ENCODE measurements at regions of chr1 and their contacts with region 1.

Region 1: DNA sequence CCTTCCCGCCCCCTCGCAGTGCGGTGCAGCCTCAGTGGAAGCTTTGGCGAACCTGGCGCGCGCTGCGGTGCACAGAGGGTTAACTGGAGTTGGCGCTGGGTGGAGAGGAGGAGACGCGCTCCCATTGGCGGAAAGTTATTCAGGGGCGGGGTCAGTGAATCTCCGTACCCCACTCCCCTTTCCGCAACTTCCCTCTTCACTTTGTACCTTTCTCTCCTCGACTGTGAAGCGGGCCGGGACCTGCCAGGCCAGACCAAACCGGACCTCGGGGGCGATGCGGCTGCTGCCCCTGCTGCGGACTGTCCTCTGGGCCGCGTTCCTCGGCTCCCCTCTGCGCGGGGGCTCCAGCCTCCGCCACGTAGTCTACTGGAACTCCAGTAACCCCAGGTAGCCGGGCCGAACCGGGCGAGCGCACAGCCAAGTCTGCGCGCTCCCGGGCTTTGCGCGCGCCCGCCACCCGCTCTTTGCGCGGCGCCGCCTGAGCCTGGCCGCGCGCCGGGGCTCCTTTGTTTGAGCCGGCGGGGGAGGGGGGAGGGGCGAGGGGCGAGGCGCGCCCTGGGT is at the start of gene EFNA4:
- DNase-seq: peak; percentile 82
- ATAC-seq: peak; percentile 84
- H3K4me3 ChIP-seq: peak within 1 kb of the TSS; percentile 72 to 91 (median 83)
- H3K27ac ChIP-seq: peak within 1 kb of the TSS; percentile 92
- H3K4me1 ChIP-seq: peaks cover 32% of the 10 kb centered on the region
- H3K27me3 ChIP-seq: no peaks in the 10 kb centered on the region
- CTCF ChIP-seq: no peak; the same call in 1 of the 2 replicates
- EP300 ChIP-seq: no peak
- POLR2A ChIP-seq: peak; percentile 81 to 95
- RAD21 ChIP-seq: no peak
- total RNA-seq, gene EFNA4: 9.3 and 17.2 TPM in 2 replicates

Region 2: GRCh38 chr1:154982897-154983648 is 80.6 kb before region 1 on chr1 and contains the start of gene FLAD1:
- CTCF ChIA-PET with region 1: no interaction called
- POLR2A ChIA-PET with region 1: interaction called, 3 read pairs
- in situ Hi-C with region 1: loop called (anchors 5 kb)
- intact Hi-C with region 1: no loop called
- DNase-seq: peak; percentile 99
- ATAC-seq: peak; percentile 99
- H3K4me3 ChIP-seq: peak within 1 kb of the TSS; percentile 74 to 86 (median 76)
- H3K27ac ChIP-seq: peak within 1 kb of the TSS; percentile 64
- H3K4me1 ChIP-seq: peaks cover 34% of the 10 kb centered on the region
- H3K27me3 ChIP-seq: no peaks in the 10 kb centered on the region
- CTCF ChIP-seq: no peak
- EP300 ChIP-seq: no peak
- POLR2A ChIP-seq: peak; percentile 56 to 71; a peak in 3 of 4 replicates
- RAD21 ChIP-seq: no peak
- total RNA-seq, gene FLAD1: 32.8 and 32.9 TPM in 2 replicates

Region 3: DNA sequence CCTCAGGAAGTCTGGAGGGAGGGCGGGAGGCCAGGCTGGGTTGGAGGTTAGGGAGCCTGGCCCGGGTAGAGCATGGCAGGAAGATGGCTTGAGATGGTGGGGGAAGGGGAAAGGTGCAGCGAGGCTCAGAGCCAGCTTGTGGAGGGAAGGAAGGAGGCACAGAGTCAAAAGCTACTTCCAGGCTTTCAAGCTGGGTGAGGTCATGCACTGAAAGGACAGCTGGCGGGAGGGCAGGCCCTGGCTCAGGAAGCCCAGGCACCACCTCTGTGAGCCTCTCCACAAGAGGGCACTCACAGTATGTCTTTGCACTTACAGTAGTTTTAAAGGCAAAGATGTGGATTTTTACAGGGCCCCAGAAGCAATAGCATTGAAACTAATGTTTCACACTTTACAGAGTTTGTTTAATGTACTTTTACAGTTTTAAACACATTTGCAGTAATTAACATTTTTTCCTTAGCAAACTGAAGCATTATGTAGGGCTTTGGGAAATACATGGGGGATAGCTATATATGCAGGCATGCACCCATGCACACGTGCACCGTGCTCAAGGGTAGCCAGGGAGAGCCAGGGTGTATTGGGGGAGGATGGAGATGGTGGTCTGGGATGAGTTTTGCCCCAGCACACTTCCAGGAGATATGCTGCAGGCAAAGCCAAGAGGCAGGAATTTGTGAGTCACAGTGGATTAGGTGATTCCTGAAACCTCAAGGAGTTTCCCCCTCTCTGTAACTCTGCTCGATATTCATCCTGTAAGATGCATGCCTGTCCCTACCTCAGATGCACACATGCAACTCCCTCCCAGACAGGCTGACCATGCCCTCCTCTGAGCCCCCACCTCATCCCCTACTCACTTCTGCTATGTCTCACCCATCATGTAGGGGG is 18.6 kb before region 1 on chr1:
- CTCF ChIA-PET with region 1: interaction called, 27 read pairs
- POLR2A ChIA-PET with region 1: interaction called, 4 read pairs
- in situ Hi-C with region 1: no loop called
- intact Hi-C with region 1: no loop called
- DNase-seq: peak; percentile 79
- ATAC-seq: peak; percentile 85
- H3K4me3 ChIP-seq: peak overlapping the region in 1 of 3 experiments; percentile 8; a peak in 1 of 6 replicates
- H3K27ac ChIP-seq: no peak overlapping the region
- H3K4me1 ChIP-seq: peaks cover 69% of the 10 kb centered on the region
- H3K27me3 ChIP-seq: peaks cover 7 to 21% of the 10 kb centered on the region in 2 experiments
- CTCF ChIP-seq: peak; percentile 89
- EP300 ChIP-seq: no peak
- POLR2A ChIP-seq: no peak
- RAD21 ChIP-seq: peak; percentile 81

Region 4: GRCh38 chr1:155078469-155079209 is 15.0 kb after region 1 on chr1 and contains the start of gene EFNA3:
- CTCF ChIA-PET with region 1: interaction called, 39 read pairs
- POLR2A ChIA-PET with region 1: interaction called, 10 read pairs
- in situ Hi-C with region 1: no loop called
- intact Hi-C with region 1: no loop called
- DNase-seq: no peak
- ATAC-seq: peak; percentile 17
- H3K4me3 ChIP-seq: peak within 1 kb of the TSS; percentile 41 to 70 (median 50)
- H3K27ac ChIP-seq: no peak within 1 kb of the TSS
- H3K4me1 ChIP-seq: peaks cover 58% of the 10 kb centered on the region
- H3K27me3 ChIP-seq: peaks cover 26 to 92% of the 10 kb centered on the region in 2 experiments
- CTCF ChIP-seq: no peak
- EP300 ChIP-seq: no peak
- POLR2A ChIP-seq: no peak
- RAD21 ChIP-seq: no peak
- total RNA-seq, gene EFNA3: 1.0 and 1.6 TPM in 2 replicates

Region 5: GRCh38 chr1:155084722-155085503 is 21.3 kb after region 1 on chr1:
- CTCF ChIA-PET with region 1: interaction called, 39 read pairs
- POLR2A ChIA-PET with region 1: interaction called, 11 read pairs
- in situ Hi-C with region 1: no loop called
- intact Hi-C with region 1: loop called (anchors 1 kb)
- DNase-seq: peak; percentile 82
- ATAC-seq: peak; percentile 82
- H3K4me3 ChIP-seq: peak overlapping the region; percentile 72 to 89 (median 75)
- H3K27ac ChIP-seq: peak overlapping the region; percentile 74
- H3K4me1 ChIP-seq: peaks cover 83% of the 10 kb centered on the region
- H3K27me3 ChIP-seq: peaks cover 22 to 44% of the 10 kb centered on the region in 2 experiments
- CTCF ChIP-seq: peak; percentile 99
- EP300 ChIP-seq: no peak
- POLR2A ChIP-seq: no peak
- RAD21 ChIP-seq: peak; percentile 94